HEK293 (cell line): ENCODE measurements at regions of chr22 and their contacts with region 1.

Region 1: DNA sequence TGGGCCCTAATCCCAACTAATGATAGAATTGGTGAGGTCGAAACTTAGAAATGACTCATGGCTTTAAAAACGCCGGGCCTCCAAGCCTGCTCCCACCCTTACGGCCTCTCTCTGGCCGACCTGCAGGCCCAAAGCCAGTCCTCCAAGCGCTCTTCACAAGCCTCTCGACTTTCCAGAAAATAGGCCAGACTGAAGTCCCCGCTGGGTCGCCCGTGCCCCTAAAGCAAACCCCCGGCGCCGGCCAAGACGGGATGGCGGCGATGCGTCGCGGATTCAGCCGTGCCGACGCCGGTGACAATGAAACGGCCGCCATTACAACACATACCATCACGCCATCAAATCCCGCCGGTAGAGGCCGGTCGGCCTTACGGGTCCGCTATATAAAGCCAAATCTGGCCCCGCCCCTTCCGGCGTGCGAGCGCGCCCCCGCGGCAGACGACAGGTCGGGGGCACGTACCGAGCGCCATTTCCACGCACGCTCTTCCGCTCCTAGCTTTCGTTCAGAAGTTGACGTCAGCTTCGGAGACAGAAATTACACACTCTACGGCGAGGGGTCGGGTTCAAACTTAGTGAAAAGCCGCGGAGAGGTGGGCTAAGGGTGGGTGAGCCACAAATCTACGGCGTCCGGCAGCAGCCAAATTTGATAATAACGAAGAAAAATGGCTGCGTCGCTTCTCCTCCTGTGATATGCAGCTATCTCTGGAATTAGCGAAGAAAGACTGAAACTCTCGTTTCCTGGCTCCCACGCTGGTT is at the start of gene RPL3:
- H3K4me3 ChIP-seq: peak within 1 kb of the TSS; percentile 73
- H3K27ac ChIP-seq: peak within 1 kb of the TSS; percentile 99
- H3K4me1 ChIP-seq: 0 out of 2 replicates have a peak, but pooled peaks cover 4% of the 10 kb centered on the region
- CTCF ChIP-seq: peak; percentile 86

Region 2: GRCh38 chr22:38739300-38740055 is 580.0 kb before region 1 on chr22:
- CTCF ChIA-PET with region 1: no interaction called
- POLR2A ChIA-PET with region 1: interaction called, 11 read pairs
- H3K4me3 ChIP-seq: no peak overlapping the region
- H3K27ac ChIP-seq: no peak overlapping the region
- H3K4me1 ChIP-seq: no peaks in the 10 kb centered on the region
- CTCF ChIP-seq: no peak

Region 3: GRCh38 chr22:39170825-39171622 is 148.4 kb before region 1 on chr22:
- CTCF ChIA-PET with region 1: interaction called, 98 read pairs
- POLR2A ChIA-PET with region 1: interaction called, 119 read pairs
- H3K4me3 ChIP-seq: no peak overlapping the region
- H3K27ac ChIP-seq: no peak overlapping the region
- H3K4me1 ChIP-seq: peaks cover 10% of the 10 kb centered on the region
- CTCF ChIP-seq: peak; percentile 89

Region 4: DNA sequence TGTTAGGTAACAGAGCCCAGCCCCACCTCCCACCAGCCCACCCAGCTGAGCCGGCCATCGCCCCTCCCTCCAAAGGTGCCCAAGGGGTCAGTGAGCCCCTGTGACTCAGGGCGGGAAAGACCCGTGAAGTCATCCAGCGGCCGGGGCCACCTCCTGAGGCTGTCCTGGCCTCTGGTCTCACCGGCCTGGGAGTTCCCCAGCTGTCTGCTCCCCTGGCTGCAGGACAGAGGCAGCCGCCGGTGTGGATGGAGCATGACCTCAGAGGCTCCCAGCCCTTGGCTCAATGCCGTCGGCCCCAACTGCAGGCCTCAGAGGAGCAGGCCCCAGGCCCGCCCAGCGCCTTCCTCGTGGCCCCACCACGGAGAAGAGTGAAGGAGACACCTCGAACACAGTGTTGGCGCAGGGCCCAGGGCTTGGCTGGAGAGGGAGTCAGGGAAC is 28.7 kb before region 1 on chr22:
- CTCF ChIA-PET with region 1: interaction called, 4 read pairs
- POLR2A ChIA-PET with region 1: interaction called, 10 read pairs
- H3K4me3 ChIP-seq: no peak overlapping the region
- H3K27ac ChIP-seq: no peak overlapping the region
- H3K4me1 ChIP-seq: 0 out of 2 replicates have a peak, but pooled peaks cover 4% of the 10 kb centered on the region
- CTCF ChIP-seq: no peak

Region 5: GRCh38 chr22:39332441-39333064 is 13.1 kb after region 1 on chr22:
- CTCF ChIA-PET with region 1: interaction called, 19 read pairs
- POLR2A ChIA-PET with region 1: interaction called, 104 read pairs
- H3K4me3 ChIP-seq: no peak overlapping the region
- H3K27ac ChIP-seq: no peak overlapping the region
- H3K4me1 ChIP-seq: 0 out of 2 replicates have a peak, but pooled peaks cover 2% of the 10 kb centered on the region
- CTCF ChIP-seq: no peak

Region 6: DNA sequence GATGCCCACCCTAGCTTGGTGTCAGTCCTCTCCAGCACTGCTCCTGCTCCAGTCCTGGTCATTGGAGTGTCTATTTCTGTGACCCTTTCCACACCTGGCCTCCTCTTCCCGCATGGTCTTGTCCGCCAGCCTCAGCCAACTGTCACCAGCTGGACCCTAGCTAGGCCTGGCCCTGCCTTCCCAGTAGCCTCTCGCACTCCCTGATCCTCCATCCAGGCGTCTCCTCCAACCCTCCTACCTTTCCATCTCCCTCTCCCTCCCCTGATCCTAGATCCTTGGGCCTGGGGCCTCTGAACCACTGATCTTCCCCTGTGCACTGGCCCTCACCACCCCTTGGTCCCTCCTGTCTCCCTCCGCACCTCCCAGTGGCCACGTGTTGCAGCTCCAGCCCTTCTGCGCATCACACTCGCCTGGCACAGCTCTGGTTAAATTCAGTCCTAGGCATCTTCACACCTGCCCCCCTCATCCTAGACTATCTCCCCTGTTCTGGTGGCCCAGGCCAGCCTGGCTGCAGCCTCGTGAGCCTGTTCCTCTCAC is 40.3 kb after region 1 on chr22:
- CTCF ChIA-PET with region 1: interaction called, 3 read pairs
- POLR2A ChIA-PET with region 1: interaction called, 16 read pairs
- H3K4me3 ChIP-seq: no peak overlapping the region
- H3K27ac ChIP-seq: no peak overlapping the region
- H3K4me1 ChIP-seq: no peaks in the 10 kb centered on the region; the same call in 1 of the 2 replicates
- CTCF ChIP-seq: no peak

Region 7: DNA sequence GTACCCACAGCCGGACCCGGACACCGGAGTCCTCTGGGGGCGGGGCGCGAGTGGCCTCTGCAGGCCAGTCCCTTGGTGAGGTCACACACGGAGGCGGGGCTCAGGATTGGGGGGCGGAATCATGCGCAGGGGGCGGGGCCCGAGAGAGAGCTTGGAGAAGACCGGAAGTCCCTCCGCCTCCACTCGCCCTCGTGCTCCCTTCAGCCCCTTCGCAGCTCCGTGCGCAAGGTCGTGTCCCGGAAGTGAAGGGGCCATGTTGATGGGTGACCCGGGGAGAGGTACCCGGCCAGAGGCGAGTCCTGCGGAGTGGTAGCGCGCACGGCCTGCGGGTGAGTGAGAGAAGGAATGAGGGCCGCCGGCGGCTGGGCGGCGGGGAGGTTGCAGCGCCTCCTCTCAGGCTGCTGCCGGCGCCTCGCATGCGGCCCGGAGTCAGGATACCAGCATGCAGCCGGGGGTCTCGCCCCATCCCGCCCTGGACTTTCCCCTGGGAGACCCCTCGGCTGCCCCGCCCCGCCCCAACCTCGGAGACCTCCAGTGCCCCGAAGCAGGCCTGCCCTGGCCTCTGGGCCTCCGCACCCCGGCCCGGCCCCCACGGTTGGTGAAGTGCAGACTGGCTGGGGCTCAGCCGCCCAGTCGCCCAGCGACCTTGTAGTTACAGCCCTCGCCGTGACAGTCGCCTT is 182.8 kb after region 1 on chr22 and contains the start of gene MIEF1:
- CTCF ChIA-PET with region 1: no interaction called
- POLR2A ChIA-PET with region 1: interaction called, 20 read pairs
- H3K4me3 ChIP-seq: peak within 1 kb of the TSS; percentile 92
- H3K27ac ChIP-seq: peak within 1 kb of the TSS; percentile 78
- H3K4me1 ChIP-seq: peaks cover 12% of the 10 kb centered on the region
- CTCF ChIP-seq: peak; percentile 12